ENCODE measurements at regions of chr5 and their contacts with region 1.

Region 1: DNA sequence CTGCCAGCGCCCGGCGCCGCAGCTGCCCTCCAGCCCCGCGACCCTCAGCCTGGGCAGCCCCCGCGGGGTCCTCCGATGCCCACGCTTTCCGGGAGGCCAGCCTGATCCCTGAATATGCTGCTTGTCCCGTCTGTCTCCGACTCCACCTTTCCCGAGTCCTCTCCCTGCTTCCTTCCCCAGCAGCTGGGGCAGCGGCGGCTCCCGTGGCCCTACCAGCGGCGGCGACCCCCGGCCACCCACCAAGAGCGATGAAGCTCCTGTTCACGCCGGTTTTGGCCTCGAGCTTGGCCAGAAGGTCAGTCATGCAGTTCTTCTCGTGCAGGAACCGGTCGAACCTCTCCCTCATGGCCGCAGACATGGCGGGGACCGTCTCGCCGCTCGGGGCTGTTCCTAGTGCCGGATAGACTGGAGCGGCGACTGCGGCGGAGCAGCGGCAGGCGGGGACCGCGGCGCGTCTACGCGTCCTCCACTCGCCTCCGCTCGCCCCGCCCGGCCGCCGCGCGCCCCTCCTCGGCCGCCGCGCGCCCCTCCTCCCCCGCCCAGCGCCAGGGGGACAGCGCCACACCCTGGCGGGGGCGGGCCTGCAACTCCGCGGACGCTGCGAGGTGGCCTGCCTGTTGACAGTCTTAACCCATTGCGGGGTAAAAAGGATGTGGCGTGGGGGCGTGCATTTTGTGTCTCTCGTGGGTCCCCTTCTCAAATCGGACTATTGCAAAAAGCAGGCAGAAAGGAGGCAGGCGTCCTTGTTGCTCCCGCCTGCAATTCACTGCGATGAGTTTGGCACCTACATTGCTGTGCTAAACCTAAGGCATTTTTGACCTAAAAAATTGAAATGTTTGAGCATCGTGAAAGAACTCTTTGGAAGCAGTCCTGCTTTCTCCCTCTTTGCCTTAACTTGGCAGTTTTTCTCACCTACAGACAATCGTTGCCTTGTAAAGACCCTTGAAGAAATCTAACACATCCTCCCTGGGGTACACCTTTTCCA is at the start of gene REEP5:
- DNase-seq: peak; percentile 75
- H3K4me3 Mint-ChIP-seq: peak within 1 kb of the TSS; percentile 99
- H3K27ac Mint-ChIP-seq: peak within 1 kb of the TSS; percentile 98
- H3K4me1 Mint-ChIP-seq: peaks cover 19% of the 10 kb centered on the region
- H3K27me3 Mint-ChIP-seq: no peaks in the 10 kb centered on the region
- CTCF ChIP-seq: peak; percentile 54
- total RNA-seq, gene REEP5: 64.8 and 65.2 TPM in 2 replicates

Region 2: GRCh38 chr5:112811023-112811422 is 111.1 kb before region 1 on chr5:
- CTCF ChIA-PET with region 1: no interaction called
- POLR2A ChIA-PET with region 1: no interaction called
- intact Hi-C with region 1: no loop called
- DNase-seq: no peak
- H3K4me3 Mint-ChIP-seq: no peak overlapping the region
- H3K27ac Mint-ChIP-seq: no peak overlapping the region
- H3K4me1 Mint-ChIP-seq: no peaks in the 10 kb centered on the region
- H3K27me3 Mint-ChIP-seq: no peaks in the 10 kb centered on the region
- CTCF ChIP-seq: no peak

Region 3: GRCh38 chr5:112860929-112861637 is 61.0 kb before region 1 on chr5 and contains the start of gene SRP19:
- CTCF ChIA-PET with region 1: no interaction called
- POLR2A ChIA-PET with region 1: interaction called, 18 read pairs
- intact Hi-C with region 1: loop called (anchors 5 kb)
- DNase-seq: peak; percentile 98
- H3K4me3 Mint-ChIP-seq: peak within 1 kb of the TSS; percentile 88
- H3K27ac Mint-ChIP-seq: peak within 1 kb of the TSS; percentile 94
- H3K4me1 Mint-ChIP-seq: peaks cover 13% of the 10 kb centered on the region
- H3K27me3 Mint-ChIP-seq: peaks cover 24% of the 10 kb centered on the region
- CTCF ChIP-seq: no peak
- total RNA-seq, gene SRP19: 88.9 and 99.6 TPM in 2 replicates

Region 4: DNA sequence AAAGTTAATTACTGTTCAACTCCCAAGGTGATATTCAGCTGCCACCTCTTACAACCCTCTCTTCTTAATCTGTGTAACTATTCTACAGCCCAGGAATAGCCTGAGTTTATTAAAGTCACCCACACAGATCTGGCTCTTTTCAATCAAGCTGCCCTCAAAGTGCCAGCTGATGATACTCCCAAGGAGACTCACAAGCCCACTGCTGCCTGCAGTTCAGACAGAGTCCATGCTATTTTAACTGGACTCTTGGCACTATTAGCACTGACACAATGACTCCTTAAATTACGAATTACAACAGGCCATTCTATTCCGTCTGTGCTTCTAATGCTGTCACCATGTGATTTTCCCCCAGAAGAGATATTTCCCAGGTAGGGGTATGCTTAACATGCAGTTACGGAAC is 26.4 kb before region 1 on chr5:
- CTCF ChIA-PET with region 1: interaction called, 4 read pairs
- POLR2A ChIA-PET with region 1: interaction called, 10 read pairs
- intact Hi-C with region 1: no loop called
- DNase-seq: no peak
- H3K4me3 Mint-ChIP-seq: no peak overlapping the region
- H3K27ac Mint-ChIP-seq: no peak overlapping the region
- H3K4me1 Mint-ChIP-seq: no peaks in the 10 kb centered on the region
- H3K27me3 Mint-ChIP-seq: no peaks in the 10 kb centered on the region
- CTCF ChIP-seq: no peak

Region 5: DNA sequence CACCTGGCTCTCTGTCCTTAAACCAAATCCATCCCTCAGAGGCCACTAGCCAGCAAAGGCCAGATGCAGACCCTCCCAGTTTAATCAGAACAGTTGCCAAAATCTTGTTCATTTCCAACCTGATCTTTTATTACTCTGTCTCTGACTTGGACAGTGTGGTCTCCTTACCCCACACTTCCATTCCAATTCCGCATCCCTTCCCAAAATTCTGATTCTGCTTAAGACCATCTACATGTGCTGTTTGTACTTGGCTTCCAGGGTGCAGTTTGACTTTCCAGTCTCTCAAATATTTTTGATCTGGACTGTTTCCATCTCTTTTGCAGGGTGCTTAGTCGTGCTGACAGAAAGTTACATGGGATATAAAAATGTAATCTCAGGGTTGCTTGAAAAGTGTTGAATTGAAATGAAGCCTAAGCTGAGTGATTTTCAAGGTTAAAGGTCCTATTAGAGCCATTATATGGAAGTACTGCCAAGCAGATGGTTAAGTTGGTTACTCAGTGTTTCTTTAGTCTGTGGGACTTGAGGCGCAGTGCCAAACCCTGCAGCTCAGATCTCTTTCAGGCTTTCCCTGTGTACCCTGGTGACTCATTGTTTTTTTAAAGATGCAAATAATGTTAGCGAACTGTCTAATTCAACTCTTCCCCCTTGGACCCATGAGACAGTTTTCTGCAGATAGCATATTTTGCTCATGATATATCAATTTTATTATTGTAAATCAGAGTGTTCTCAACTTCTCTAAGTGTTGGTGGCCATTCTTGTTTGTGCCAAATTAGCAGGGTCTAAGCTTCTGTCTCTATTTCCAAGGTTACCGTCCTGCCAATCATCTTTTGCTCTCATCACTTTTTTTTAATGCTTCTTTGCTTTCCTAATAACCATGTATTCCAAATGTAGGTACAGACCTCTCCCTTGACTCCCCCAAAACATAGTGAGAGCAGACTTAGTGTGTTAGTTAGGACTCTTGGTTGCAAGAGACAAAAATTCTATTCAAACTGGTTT is 36.3 kb after region 1 on chr5:
- CTCF ChIA-PET with region 1: interaction called, 6 read pairs
- POLR2A ChIA-PET with region 1: interaction called, 22 read pairs
- intact Hi-C with region 1: no loop called
- DNase-seq: peak; percentile 98
- H3K4me3 Mint-ChIP-seq: no peak overlapping the region
- H3K27ac Mint-ChIP-seq: no peak overlapping the region
- H3K4me1 Mint-ChIP-seq: peaks cover 36% of the 10 kb centered on the region
- H3K27me3 Mint-ChIP-seq: no peaks in the 10 kb centered on the region
- CTCF ChIP-seq: no peak

Region 6: DNA sequence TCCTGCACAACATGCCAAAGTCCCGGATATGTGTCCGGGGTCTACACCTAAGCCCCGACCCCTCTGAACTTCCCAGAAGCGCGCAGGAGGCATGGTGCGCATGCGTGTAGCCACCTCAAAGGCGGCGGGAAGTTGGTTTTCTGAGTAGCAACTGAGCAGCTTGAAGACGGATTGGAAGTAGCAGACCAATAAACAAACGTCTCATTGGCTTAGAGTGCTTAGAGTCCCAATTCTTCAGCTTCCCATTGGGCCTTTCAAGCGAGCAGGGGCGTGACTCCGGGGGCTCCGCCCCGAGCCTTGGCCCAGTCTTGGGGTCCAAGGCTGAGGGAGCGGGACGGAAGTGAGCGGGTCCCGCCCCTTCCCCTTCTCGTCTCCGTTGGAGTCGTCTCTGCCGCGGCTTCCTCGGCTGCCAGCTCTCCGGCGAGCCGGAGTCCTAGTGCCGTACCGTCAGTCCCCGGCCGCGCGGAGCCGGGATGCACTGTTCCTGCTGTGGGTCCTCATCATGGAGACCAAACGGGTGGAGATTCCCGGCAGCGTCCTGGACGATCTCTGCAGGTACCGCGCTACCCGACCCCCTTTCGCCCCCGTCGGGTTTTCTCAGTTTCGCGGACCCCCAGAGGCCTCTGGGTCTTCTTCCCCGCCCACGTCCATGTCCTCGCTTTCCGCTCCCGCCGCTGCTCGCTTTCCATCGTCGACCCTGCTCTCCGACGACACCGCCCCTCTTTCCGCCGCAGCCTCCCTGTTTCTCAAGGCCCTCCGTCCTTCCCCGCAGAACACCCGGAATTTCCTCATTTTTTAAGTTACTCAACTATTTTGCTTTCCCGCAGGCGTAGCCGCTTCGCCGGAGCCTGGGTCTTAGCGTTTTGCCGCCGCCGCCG is 54.5 kb after region 1 on chr5 and contains the start of gene DCP2:
- CTCF ChIA-PET with region 1: interaction called, 4 read pairs
- POLR2A ChIA-PET with region 1: interaction called, 26 read pairs
- intact Hi-C with region 1: no loop called
- DNase-seq: peak; percentile 99
- H3K4me3 Mint-ChIP-seq: peak within 1 kb of the TSS; percentile 97
- H3K27ac Mint-ChIP-seq: peak within 1 kb of the TSS; percentile 98
- H3K4me1 Mint-ChIP-seq: peaks cover 15% of the 10 kb centered on the region
- H3K27me3 Mint-ChIP-seq: no peaks in the 10 kb centered on the region
- CTCF ChIP-seq: no peak
- total RNA-seq, gene DCP2: 32.7 and 34.1 TPM in 2 replicates

Measured in MCF 10A (cell line).